ENCODE measurements at regions of chr3 and their contacts with region 1.

Region 1: DNA sequence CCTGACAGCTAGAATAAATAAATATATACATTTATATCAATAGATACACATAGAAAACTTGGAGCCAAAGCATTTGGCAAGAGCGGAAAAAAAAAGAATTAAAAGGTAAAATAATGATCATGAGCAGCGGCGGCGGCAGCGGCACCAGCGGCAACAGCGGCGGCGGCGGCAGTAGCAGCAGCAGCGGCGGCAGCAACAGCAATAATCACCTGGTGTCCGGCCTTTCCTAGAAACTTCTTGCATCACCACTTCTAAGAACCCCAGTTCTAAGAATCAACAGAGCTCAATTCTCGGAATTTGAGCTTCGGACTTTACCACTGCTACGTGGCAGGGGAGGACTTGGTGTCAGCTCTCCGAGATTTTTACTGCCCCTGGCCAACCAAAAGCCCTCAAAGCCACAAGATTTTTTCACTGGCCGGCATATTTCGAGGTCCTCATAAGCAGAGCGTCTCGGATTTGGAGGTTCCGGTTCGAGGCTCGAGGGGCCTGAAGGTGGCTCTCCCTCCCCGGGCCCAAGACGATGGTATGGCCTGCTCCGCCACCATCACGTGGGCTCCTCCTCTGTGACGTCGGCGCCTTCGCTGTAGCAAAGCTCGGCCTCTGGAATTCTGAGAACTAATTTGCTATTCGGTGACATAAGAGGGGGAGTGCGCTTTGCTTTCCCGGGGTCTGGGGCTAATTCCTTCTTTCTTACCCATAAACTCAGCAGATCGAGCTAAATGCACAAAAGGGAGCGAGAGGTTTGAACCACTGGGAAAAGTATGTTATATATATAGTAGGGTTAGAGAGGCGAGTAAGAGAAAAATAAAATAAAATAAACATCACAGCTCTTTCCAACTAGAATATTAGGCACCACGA is at the start of gene BCL6:
- DNase-seq: peak; percentile 92
- H3K4me3 ChIP-seq: peak within 1 kb of the TSS; percentile 88
- H3K27ac ChIP-seq: peak within 1 kb of the TSS; percentile 99
- H3K4me1 ChIP-seq: peaks cover 77% of the 10 kb centered on the region
- H3K27me3 ChIP-seq: no peaks in the 10 kb centered on the region
- CTCF ChIP-seq: no peak
- total RNA-seq, gene BCL6: 47.7 TPM

Region 2: GRCh38 chr3:188037216-188037718 is 291.8 kb after region 1 on chr3:
- intact Hi-C with region 1: loop called (anchors 10 kb)
- DNase-seq: no peak
- H3K4me3 ChIP-seq: peak overlapping the region; percentile 20
- H3K27ac ChIP-seq: peak overlapping the region; percentile 75
- H3K4me1 ChIP-seq: peaks cover 23% of the 10 kb centered on the region
- H3K27me3 ChIP-seq: no peaks in the 10 kb centered on the region
- CTCF ChIP-seq: peak; percentile 67

Region 3: DNA sequence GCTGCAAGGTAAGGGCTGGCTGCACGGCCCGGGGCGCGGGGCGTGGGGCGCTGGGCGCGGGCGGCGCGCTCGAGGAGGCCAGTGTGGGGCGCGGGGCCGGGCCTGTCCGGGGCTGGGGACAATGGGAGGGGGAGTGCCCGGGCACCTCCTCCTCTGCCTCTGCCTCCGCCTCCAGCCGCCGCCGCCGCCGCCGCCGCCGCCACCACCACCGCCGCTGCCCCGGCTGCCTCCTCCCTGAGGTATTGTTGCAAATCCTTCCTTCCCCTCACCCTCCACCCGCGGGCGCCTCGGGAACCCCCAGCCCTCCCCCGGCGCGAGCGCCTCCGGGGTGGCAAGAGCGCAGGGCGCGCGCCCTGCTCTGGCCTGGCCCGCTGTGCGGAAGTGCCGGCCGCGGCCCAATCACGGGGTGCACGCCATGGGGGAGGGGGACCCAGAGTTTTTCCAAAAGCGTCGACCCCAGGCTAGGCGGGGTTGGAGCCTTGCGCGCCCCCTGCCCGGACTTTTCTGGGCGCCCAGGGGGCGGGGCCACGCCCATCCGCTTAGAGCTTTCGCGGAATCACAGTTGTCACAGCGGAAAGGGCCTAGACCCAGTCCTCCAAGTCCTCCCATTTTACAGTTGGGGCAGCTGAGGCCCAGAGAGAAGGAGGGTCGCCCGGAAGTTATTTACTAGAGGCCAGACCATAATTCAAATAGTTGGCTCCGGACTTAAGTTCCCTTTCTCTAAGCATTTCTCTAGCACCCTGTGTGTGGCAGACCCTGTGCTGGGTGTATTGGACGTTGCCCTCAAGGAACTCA is 408.8 kb after region 1 on chr3 and contains the start of gene LPP:
- intact Hi-C with region 1: loop called (anchors 10 kb)
- DNase-seq: peak; percentile 82
- H3K4me3 ChIP-seq: peak within 1 kb of the TSS; percentile 97
- H3K27ac ChIP-seq: peak within 1 kb of the TSS; percentile 98
- H3K4me1 ChIP-seq: peaks cover 77% of the 10 kb centered on the region
- H3K27me3 ChIP-seq: no peaks in the 10 kb centered on the region
- CTCF ChIP-seq: peak; percentile 9
- total RNA-seq, gene LPP: 97.4 TPM